Esophagus squamous epithelium (tissue), 5 donors: ENCODE measurements at regions of chr11 and their contacts with region 1.

Region 1: GRCh38 chr11:120172054-120172911 is 34.4 kb upstream of the TRIM29 start:
- DNase-seq: no peak
- H3K4me3 ChIP-seq: no peak overlapping the region
- H3K27ac ChIP-seq: no peak overlapping the region
- H3K4me1 ChIP-seq: peaks cover 15 to 38% (median 17%) of the 10 kb centered on the region in 3 donors
- H3K27me3 ChIP-seq: peaks cover 0 to 51% (median 0%) of the 10 kb centered on the region in 4 donors
- CTCF ChIP-seq: peak; percentile 66 to 89 (median 83)
- POLR2A ChIP-seq: no peak

Region 2: DNA sequence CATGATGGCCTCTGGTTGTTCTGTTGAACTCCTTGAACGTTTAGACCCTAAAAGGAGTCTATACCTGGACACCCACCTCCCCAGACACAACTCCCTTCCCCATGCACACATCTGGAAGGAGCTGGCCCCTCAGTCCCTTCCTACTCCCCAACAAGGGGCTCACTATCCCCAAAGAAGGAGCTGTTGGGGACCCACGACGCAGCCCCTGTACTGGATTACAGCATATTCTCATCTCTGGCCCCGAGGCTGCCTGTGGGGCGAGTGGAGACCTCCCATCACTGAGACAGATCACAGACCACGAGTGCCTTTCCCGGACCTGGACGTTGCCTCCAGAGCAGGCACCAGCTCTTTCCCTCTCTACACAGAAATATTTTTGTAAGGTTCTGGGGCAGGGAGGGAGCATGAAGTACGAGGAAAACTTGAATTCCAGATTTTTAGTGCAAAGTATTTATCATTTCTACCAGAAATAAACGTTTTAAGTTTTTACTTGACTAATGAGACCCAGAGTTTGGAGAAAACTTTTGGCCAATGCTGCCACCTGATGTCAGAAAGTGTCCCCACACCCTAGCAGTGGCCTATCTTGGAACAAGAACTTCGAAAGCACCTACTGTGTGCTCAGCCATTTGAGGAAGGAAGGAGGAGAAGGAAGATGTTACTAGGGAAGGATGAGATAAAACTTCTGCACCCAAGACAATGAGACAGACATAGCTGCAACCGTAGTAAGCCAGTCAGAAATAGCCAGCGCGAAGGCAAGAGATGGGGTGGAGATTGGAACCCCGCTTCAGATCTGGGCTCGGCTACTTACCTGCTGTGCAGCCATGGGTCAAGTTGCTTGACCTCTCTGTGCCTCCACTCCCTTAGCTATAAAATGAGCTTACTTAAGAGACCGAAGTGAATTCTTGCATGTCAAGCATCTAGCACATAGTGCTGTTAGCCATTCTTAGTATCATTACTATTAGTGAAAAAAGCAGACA is 57.5 kb after region 1 on chr11:
- intact Hi-C with region 1: loop called (anchors 5 kb)
- DNase-seq: no peak
- H3K4me3 ChIP-seq: no peak overlapping the region
- H3K27ac ChIP-seq: no peak overlapping the region
- H3K4me1 ChIP-seq: peaks cover 4 to 20% (median 10%) of the 10 kb centered on the region in 3 donors
- H3K27me3 ChIP-seq: peaks cover 0 to 24% (median 0%) of the 10 kb centered on the region in 4 donors
- CTCF ChIP-seq: peak; percentile 28 to 72 (median 66)
- POLR2A ChIP-seq: no peak

Region 3: DNA sequence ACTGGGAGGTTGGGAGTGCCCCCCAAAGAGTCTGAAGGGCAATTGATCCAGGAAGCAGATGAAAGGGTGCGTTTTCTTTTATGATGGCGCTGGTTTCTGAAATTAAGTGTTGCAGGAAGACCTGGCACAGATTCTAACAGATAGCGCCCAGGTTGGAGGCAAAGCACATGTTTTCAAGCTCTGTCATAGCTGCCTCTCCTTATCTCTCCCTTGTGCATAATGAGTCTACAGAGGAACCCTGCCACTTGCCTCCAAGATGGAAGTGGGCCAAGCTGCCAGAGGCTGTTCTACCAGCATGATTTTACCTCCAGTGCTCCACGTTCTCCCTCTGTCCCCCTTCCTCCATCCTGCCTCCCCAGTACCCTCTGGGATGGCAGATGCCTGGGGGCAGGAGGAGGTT is 122.8 kb after region 1 on chr11:
- intact Hi-C with region 1: loop called (anchors 5 kb)
- DNase-seq: no peak
- H3K4me3 ChIP-seq: no peak overlapping the region
- H3K27ac ChIP-seq: no peak overlapping the region
- H3K4me1 ChIP-seq: peaks cover 0 to 9% (median 4%) of the 10 kb centered on the region in 3 donors
- H3K27me3 ChIP-seq: peaks cover 0 to 32% (median 0%) of the 10 kb centered on the region in 4 donors
- CTCF ChIP-seq: no peak
- POLR2A ChIP-seq: no peak